ENCODE measurements at regions of chr4 and their contacts with region 1.

Region 1: DNA sequence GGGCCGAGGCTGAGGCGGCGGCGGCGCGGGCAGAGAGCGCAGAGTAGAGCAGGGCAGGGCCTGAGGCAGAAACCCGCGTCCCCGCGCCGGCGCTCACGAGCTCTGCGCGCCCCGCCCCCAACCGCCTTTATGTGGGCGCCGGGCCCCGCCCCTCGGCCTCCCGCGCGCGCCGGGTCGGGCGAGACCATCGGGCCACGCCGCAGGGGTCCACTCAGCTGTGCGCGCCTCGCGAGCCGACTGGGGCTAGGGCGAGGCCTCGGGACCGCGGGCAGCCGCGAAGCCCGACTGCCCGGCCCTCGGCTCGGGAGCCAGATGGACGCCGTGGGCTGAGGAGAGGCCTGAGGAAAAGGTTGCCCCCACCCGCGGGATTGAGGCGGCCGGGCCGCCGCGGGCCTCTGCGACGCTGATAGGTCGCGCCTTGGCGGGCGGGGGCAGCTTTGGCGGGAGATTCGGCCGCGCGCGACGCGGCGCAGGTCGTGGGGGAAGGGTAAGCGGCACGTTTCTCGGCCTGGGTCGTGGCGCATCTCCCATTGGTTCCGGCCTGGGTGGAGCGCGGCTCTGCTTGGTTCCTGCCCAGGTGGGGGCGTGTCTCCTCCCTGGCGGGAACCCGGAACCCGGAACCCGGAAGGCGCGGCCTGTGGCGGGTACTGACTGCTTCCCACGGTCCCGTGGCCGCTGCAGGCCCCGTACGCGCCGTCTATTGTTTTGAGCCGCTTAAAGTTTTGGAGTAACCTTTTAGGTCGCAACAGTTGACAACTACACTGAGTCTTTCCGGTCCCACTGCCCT is at the start of gene SLBP:
- H3K4me3 Mint-ChIP-seq: peak within 1 kb of the TSS; percentile 82
- H3K27ac Mint-ChIP-seq: peak within 1 kb of the TSS; percentile 95
- H3K4me1 Mint-ChIP-seq: peaks cover 76% of the 10 kb centered on the region
- H3K27me3 Mint-ChIP-seq: no peaks in the 10 kb centered on the region

Region 2: DNA sequence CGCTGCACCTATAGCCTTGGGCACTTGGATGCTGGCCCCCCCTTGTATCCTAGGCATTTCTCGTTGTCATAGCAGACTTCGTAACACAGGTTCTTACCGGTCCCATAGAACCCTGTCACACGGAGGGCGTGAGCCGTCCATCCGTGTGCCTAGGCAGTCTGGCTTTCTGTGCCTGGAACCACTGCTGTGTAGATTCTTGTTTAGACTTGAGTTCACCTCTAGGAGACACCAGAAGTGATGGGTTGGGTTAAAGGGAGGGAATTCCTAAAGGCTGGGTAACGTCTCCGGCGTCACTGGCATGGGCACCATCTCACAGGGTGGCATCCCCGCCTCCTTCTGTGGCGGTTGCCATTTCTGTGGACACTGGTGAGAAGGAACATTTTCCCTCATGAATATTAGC is 292.7 kb before region 1 on chr4:
- intact Hi-C with region 1: no loop called
- H3K4me3 Mint-ChIP-seq: no peak overlapping the region
- H3K27ac Mint-ChIP-seq: no peak overlapping the region
- H3K4me1 Mint-ChIP-seq: no peaks in the 10 kb centered on the region
- H3K27me3 Mint-ChIP-seq: peaks cover 45% of the 10 kb centered on the region

Region 3: DNA sequence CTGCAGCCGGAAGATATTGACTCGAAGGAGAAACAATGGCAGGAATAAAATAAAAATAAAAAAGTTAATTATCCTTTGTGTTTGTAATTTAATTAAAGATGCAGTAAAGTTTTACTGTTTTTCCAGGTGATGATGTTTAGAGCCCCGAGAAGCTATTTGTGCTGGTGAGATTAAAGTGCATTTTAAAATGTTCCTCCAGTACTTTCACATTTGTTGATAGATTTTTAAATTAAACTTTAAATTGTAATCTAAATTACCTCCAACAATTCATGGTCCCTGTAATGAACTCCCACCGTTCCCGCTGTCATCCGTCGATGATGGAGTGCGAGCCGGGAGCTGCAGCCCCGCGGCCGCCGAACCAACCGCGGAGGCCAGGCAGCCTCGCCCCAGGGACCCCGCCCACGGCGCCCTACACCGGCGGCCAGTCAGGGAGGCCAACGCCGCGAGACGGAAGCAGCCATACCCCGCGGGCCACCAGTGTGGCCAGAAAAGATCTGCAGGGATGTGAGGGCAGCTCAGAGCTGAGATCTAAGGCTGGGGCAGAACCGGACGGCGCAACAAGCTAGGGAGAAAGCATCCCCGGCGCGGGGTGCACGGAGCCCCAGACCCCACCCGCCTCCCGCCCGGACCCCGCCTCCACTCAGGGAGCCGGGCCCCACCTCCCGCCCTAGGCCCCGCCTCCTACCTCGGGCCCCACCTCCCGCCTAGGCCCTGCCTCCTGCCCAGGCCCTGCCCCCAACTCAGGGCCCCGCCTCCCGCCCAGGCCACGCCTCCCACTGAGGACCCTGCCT is 132.3 kb before region 1 on chr4:
- intact Hi-C with region 1: loop called (anchors 10 kb)
- H3K4me3 Mint-ChIP-seq: peak overlapping the region; percentile 82
- H3K27ac Mint-ChIP-seq: peak overlapping the region; percentile 91
- H3K4me1 Mint-ChIP-seq: no peaks in the 10 kb centered on the region
- H3K27me3 Mint-ChIP-seq: peaks cover 2% of the 10 kb centered on the region

Region 4: GRCh38 chr4:1596393-1596792 is 116.0 kb before region 1 on chr4:
- intact Hi-C with region 1: no loop called
- H3K4me3 Mint-ChIP-seq: no peak overlapping the region
- H3K27ac Mint-ChIP-seq: no peak overlapping the region
- H3K4me1 Mint-ChIP-seq: no peaks in the 10 kb centered on the region
- H3K27me3 Mint-ChIP-seq: no peaks in the 10 kb centered on the region

Region 5: DNA sequence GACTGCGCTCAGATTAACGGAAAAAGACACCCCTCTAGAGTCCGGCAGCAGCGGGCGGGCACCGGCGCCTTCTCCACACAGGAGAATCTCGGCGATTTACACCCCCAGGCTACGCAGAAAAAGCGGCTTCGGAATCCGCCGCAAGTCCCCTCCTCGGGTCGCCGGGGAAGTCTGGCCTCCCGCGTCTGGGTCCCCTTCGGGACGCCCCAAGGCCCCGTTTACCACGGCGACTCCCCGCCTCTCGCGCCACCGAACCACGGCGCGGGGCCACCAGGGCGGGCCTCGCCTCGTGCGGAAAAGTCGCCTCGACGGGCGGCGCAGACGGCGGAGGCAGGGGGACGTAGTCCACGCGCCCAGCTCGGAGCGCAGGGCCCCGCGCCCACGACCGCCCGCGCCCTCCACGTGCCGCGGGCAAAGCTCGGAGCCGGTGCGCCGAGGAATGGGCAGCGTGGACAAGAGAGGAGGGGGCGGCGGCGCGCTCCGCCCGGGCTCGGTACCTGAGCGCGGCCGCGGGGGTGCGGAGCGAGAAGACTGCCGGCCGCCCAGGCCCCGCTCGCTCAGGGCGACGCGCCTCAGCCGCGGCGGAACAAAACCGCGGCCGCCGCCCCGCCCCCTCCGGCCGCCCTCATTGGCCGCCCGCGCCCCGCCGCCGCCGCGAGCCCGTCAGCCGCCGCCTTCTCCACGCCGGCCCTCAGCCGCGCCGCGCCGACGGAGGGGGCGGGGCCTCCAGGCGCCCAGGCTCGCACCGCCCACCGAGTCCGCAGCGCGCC is 28.5 kb before region 1 on chr4 and contains the start of gene FAM53A:
- intact Hi-C with region 1: loop called (anchors 1 kb)
- H3K4me3 Mint-ChIP-seq: peak within 1 kb of the TSS; percentile 70
- H3K27ac Mint-ChIP-seq: peak within 1 kb of the TSS; percentile 67
- H3K4me1 Mint-ChIP-seq: peaks cover 13% of the 10 kb centered on the region
- H3K27me3 Mint-ChIP-seq: no peaks in the 10 kb centered on the region

Region 6: DNA sequence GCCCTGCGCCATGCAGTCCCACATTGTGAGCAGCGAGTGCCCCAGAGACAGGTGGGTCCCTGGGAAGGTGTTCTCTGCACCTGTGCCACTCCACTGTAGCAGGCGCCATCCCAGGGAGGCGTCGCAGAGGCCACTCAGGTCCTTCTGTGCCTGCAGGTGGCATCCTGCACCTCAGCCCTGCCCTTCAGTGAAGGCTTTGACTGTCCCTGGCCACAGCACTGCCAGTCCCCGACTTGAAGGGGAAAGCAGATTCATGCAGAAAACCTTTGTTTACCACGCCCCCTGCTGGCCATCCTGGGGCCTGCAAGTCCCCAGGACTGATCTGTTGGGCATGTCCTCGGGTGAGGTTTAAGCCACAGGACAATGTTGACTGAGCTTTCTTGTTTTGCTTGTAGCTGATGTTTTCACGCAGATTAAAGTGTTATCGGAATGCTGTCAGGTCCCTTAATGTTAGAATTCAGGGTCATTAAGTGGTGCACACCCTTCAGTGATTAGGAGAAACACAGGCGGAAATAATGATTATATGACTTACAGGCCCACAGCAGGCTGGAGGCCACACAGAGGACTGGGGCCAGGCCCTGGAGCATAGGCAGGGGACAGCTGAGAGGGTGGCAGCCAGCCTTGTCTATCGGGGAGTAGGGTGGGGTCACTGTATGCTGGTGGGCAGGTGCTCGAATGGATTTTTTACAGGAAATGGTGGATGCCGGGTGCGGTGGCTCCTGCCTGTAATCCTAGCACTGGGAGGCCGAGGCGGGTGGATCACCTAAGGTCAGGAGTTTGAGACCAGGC is 13.9 kb after region 1 on chr4:
- intact Hi-C with region 1: loop called (anchors 1 kb)
- H3K4me3 Mint-ChIP-seq: peak overlapping the region; percentile 71
- H3K27ac Mint-ChIP-seq: peak overlapping the region; percentile 96
- H3K4me1 Mint-ChIP-seq: peaks cover 84% of the 10 kb centered on the region
- H3K27me3 Mint-ChIP-seq: no peaks in the 10 kb centered on the region

Region 7: GRCh38 chr4:2008875-2009703 is 296.7 kb after region 1 on chr4 and contains the start of gene NELFA:
- intact Hi-C with region 1: loop called (anchors 10 kb)
- H3K4me3 Mint-ChIP-seq: peak within 1 kb of the TSS; percentile 84
- H3K27ac Mint-ChIP-seq: peak within 1 kb of the TSS; percentile 91
- H3K4me1 Mint-ChIP-seq: peaks cover 41% of the 10 kb centered on the region
- H3K27me3 Mint-ChIP-seq: peaks cover 8% of the 10 kb centered on the region

Measured in dendritic cell treated with granulocyte-macrophage colony-stimulating factor and Interleukin-4, amounts not matched to agents 40 ng/mL and 50 ng/mL, for 4 days (primary cell).